ENCODE measurements at regions of chr22 and their contacts with region 1.

Region 1: GRCh38 chr22:42648368-42649245 is 585 bp downstream of the CYB5R3 start:
- DNase-seq: peak; percentile 83

Region 2: GRCh38 chr22:42688241-42689211 is 39.9 kb after region 1 on chr22:
- intact Hi-C with region 1: loop called (anchors 2 kb)
- DNase-seq: peak; percentile 92

Region 3: GRCh38 chr22:42697542-42698013 is 49.0 kb after region 1 on chr22:
- intact Hi-C with region 1: loop called (anchors 1 kb)
- DNase-seq: peak; percentile 93

Region 4: GRCh38 chr22:42711281-42711731 is 62.7 kb after region 1 on chr22:
- intact Hi-C with region 1: no loop called
- DNase-seq: no peak